CD8-positive, alpha-beta T cell (primary cell): ENCODE measurements at regions of chr2 and their contacts with region 1.

Region 1: DNA sequence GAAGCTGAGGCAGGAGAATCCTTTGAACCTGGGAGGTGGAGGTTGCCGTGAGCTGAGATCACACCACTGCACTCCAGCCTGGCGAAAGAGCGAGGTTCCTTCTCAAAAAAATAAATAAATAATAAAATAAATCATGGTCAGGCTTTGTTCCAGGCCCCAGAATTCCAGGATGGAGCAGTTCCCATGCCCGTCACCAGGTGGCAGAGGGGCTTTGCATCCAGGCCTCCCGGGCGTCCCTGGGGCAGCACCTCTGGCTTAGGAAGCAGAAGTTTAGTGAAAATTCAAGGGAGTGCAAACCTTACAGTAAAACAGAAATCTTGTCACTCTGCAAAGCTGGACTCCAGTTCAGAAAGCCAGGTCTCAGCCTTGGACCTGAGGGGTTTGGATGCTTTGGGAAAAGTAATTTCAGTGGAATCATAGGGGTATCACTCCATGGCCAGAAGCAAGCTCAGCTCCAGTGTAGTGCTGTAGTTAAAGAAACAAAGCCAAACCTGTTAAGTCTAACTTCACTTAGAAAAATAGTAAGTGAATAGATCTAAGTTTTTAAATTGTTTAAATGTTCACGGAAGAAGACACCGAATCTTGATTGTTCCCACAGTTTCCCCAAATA is 512.7 kb downstream of the CMPK2 start:
- DNase-seq: no peak
- ATAC-seq: no peak
- H3K4me3 ChIP-seq: no peak overlapping the region
- H3K4me3 Mint-ChIP-seq: no peak overlapping the region
- H3K27ac ChIP-seq: no peak overlapping the region
- H3K27ac Mint-ChIP-seq: no peak overlapping the region
- H3K4me1 ChIP-seq: no peaks in the 10 kb centered on the region
- H3K4me1 Mint-ChIP-seq: no peaks in the 10 kb centered on the region
- H3K27me3 ChIP-seq: no peaks in the 10 kb centered on the region
- H3K27me3 Mint-ChIP-seq: no peaks in the 10 kb centered on the region
- CTCF ChIP-seq: no peak

Region 2: DNA sequence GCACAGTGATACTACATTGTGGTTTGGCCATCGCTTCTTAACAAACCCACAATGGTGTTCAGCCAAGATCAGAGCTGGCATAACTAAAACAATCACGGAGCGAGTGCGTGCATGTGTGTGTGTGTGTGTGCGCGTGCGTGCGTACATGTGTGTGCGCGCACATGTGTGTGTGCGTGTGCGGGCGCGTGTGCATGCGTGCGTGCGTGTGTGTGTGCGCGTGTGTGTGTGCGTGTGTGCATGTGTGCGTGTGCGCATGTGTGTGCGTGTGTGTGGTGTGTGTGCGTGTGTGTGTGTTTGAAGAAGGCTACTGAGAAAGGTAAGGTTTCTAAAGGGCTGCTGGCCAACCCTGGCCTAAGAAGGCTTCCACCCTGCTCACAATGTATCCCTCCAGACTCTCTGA is 69.8 kb before region 1 on chr2:
- CTCF ChIA-PET with region 1: no interaction called
- POLR2A ChIA-PET with region 1: no interaction called
- intact Hi-C with region 1: loop called in 1 of 2 experiments (anchors 2 kb)
- DNase-seq: no peak
- ATAC-seq: no peak
- H3K4me3 ChIP-seq: no peak overlapping the region
- H3K4me3 Mint-ChIP-seq: no peak overlapping the region
- H3K27ac ChIP-seq: no peak overlapping the region
- H3K27ac Mint-ChIP-seq: no peak overlapping the region
- H3K4me1 ChIP-seq: no peaks in the 10 kb centered on the region
- H3K4me1 Mint-ChIP-seq: no peaks in the 10 kb centered on the region
- H3K27me3 ChIP-seq: no peaks in the 10 kb centered on the region
- H3K27me3 Mint-ChIP-seq: no peaks in the 10 kb centered on the region
- CTCF ChIP-seq: no peak